ENCODE measurements at regions of chr16 and their contacts with region 1.

Region 1: GRCh38 chr16:4253394-4254150 is 11.7 kb upstream of the SRL start:
- DNase-seq: peak; percentile 92 to 99 (median 98)
- H3K4me3 ChIP-seq: peak overlapping the region; percentile 55 to 91 (median 78)
- H3K27ac ChIP-seq: peak overlapping the region; percentile 60 to 98 (median 93)
- H3K27me3 ChIP-seq: no peaks in the 10 kb centered on the region
- CTCF ChIP-seq: peak in 6 of 56 donors; percentile 99 to 100 (median 100)

Region 2: GRCh38 chr16:3983081-3983520 is 270.5 kb before region 1 on chr16:
- intact Hi-C with region 1: loop called in 1 of 2 experiments (anchors 1 kb)
- DNase-seq: peak; percentile 39 to 85 (median 70)
- H3K4me3 ChIP-seq: no peak overlapping the region
- H3K27ac ChIP-seq: no peak overlapping the region
- H3K27me3 ChIP-seq: no peaks in the 10 kb centered on the region
- CTCF ChIP-seq: peak in 54 of 56 donors; percentile 15 to 81 (median 65)

Region 3: DNA sequence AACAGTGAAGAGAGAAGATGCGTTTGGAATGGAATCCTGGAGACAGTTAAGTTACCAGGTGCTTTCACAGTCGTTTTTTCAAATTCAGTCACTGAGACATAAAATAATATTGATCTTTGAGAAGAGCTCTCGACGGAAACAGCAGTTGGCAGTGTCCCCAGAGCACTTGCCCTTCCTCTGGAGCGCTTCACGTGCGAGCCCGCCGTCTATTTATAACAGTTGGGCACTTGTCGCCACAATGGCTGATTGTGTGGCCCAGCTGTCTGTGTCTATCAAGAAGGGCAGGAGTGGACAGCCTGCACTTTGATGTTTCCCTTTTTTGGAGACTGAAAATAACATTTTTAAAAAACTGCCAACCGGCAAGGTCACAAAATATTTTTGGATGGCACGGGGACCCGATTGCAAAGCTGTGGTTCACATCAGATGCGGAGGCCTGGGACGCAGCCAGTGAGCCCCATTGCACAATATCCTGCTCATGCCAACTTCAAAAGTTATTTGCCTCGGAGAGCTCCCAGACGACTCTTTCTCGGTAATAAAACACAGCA is 200.2 kb before region 1 on chr16:
- intact Hi-C with region 1: loop called in 1 of 2 experiments (anchors 5 kb)
- DNase-seq: peak; percentile 25 to 86 (median 71)
- H3K4me3 ChIP-seq: peak overlapping the region in 55 of 59 donors; percentile 3 to 52 (median 32)
- H3K27ac ChIP-seq: peak overlapping the region in 43 of 59 donors; percentile 1 to 74 (median 47)
- H3K27me3 ChIP-seq: peaks cover 0 to 4% (median 0%) of the 10 kb centered on the region in 45 donors
- CTCF ChIP-seq: peak in 2 of 56 donors; percentile 17 to 26

Measured in dorsolateral prefrontal cortex (tissue), 120 donors.